Naive thymus-derived CD4-positive, alpha-beta T cell (primary cell): ENCODE measurements at regions of chr1 and their contacts with region 1.

Region 1: DNA sequence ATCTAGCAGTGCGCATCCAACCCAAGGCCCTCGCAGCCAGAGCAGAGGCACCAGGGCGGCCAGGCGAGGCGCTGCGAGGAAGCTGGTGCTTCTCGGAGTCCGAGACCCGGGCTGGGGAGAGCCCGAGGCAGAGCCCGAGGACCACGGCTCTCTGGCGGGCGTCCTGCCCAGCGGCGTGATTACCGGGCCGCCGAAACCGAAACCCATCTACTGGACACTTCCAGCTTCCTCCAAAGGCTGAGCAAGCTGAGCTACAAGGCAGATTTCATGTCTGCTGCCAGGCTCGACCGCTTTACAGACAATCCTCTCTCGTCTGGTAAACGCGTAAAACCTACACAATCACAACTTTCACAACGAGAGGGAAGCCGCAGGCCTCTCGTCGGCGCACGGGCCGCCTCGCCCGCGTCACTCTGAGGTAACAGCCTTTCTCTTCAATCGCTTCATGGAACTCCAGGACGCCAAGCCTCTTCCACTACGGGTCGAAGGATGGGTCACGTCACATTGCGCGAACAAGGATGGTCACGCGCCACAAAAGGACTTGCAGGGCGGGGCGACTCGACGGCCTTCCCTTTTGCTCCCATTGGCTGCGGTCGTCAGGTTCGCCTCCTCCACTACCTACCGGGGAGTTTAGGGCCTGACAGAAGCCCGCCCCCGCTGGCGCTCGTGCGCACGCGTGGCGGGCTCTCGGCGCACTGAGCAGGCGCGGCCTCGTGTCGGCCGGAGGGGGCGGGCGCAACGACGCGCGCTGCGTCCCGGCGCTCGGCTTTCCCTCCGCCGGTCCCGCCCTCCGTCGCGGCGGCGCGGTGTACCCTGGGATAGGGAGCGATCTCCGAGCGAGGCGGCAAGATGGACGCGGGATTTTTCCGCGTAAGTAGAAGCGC is at the start of gene SRRM1:
- DNase-seq: peak; percentile 96 to 100 (median 99)
- ATAC-seq: peak; percentile 93
- H3K4me3 ChIP-seq: peak within 1 kb of the TSS; percentile 83
- H3K4me3 Mint-ChIP-seq: peak within 1 kb of the TSS; percentile 88 to 100 (median 95)
- H3K27ac ChIP-seq: peak within 1 kb of the TSS; percentile 100
- H3K27ac Mint-ChIP-seq: peak within 1 kb of the TSS; percentile 95 to 100 (median 99)
- H3K4me1 ChIP-seq: peaks cover 26 to 32% of the 10 kb centered on the region in 2 donors
- H3K4me1 Mint-ChIP-seq: peaks cover 26 to 58% (median 51%) of the 10 kb centered on the region in 7 donors
- H3K27me3 ChIP-seq: no peaks in the 10 kb centered on the region
- H3K27me3 Mint-ChIP-seq: peaks cover 0 to under 1% (median 0%) of the 10 kb centered on the region in 5 donors
- total RNA-seq, gene SRRM1: 188 to 342 (median 246) TPM

Region 2: DNA sequence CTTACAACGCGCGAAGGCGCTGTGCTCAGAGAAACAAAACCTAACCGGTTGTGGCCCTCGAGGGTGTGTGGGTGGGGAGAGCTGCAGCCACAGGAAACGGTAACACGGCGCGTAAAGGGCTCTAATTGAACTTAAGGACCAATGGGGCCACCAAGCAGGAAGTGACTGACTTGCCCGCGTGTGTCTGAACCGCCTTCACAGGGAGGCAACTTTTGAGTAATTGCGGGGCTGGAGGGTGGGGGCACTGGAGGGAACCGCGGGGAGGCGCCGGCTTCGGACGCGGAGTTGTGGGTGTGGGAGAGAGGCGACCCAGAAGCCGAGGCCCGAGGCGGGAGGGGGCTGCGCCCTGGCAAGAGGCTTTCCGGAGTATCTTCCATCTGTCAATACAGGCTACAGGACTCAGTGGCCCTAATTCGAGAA is 683.7 kb before region 1 on chr1:
- CTCF ChIA-PET with region 1: no interaction called
- POLR2A ChIA-PET with region 1: no interaction called
- intact Hi-C with region 1: loop called (anchors 1 to 2 kb)
- DNase-seq: peak; percentile 60 to 96 (median 92)
- ATAC-seq: peak; percentile 89
- H3K4me3 ChIP-seq: peak overlapping the region; percentile 72
- H3K4me3 Mint-ChIP-seq: peak overlapping the region; percentile 93 to 100 (median 99)
- H3K27ac ChIP-seq: peak overlapping the region; percentile 95
- H3K27ac Mint-ChIP-seq: peak overlapping the region; percentile 98 to 100 (median 100)
- H3K4me1 ChIP-seq: peaks cover 23 to 25% of the 10 kb centered on the region in 2 donors
- H3K4me1 Mint-ChIP-seq: peaks cover 31 to 83% (median 57%) of the 10 kb centered on the region in 7 donors
- H3K27me3 ChIP-seq: no peaks in the 10 kb centered on the region
- H3K27me3 Mint-ChIP-seq: no peaks in the 10 kb centered on the region

Region 3: GRCh38 chr1:24391882-24392603 is 250.7 kb before region 1 on chr1:
- CTCF ChIA-PET with region 1: interaction called, 6 read pairs
- POLR2A ChIA-PET with region 1: interaction called, 6 read pairs
- intact Hi-C with region 1: loop called in 1 of 2 experiments (anchors 2 kb)
- DNase-seq: peak in 8 of 9 donors; percentile 29 to 60 (median 47)
- ATAC-seq: peak; percentile 81
- H3K4me3 ChIP-seq: peak overlapping the region; percentile 35
- H3K4me3 Mint-ChIP-seq: peak overlapping the region in 9 of 10 donors; percentile 18 to 77 (median 66)
- H3K27ac ChIP-seq: peak overlapping the region; percentile 60
- H3K27ac Mint-ChIP-seq: peak overlapping the region; percentile 76 to 97 (median 94)
- H3K4me1 ChIP-seq: peaks cover 12 to 29% of the 10 kb centered on the region in 2 donors
- H3K4me1 Mint-ChIP-seq: peaks cover 26 to 45% (median 40%) of the 10 kb centered on the region in 7 donors
- H3K27me3 ChIP-seq: no peaks in the 10 kb centered on the region
- H3K27me3 Mint-ChIP-seq: no peaks in the 10 kb centered on the region

Region 4: DNA sequence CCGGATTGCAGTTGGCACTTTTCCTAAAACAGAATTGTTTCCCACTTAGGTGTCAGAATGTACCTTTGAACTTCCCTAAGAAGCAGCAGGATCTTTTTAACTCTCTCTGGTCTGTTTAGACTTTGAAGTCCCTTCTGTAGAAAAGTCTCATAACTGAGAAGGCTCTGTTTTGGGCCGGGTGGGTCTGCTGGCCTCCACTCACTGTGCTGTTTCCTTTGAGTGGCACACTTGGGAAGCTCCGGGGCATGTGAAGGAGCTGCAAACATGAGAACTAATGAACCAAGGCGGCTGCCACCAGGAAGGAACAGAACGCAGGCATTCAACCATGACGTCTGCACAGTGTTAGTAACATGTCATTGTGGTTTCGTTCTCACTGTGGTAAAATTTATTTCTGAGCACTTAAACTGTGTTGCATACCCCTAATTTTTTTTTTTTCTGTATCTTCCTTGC is 106.3 kb before region 1 on chr1:
- CTCF ChIA-PET with region 1: no interaction called
- POLR2A ChIA-PET with region 1: interaction called, 7 read pairs
- intact Hi-C with region 1: loop called (anchors 2 kb)
- DNase-seq: peak; percentile 41 to 92 (median 87)
- ATAC-seq: peak; percentile 90
- H3K4me3 ChIP-seq: no peak overlapping the region
- H3K4me3 Mint-ChIP-seq: peak overlapping the region; percentile 79 to 91 (median 84)
- H3K27ac ChIP-seq: peak overlapping the region; percentile 96
- H3K27ac Mint-ChIP-seq: peak overlapping the region; percentile 93 to 100 (median 99)
- H3K4me1 ChIP-seq: peaks cover 30 to 38% of the 10 kb centered on the region in 2 donors
- H3K4me1 Mint-ChIP-seq: peaks cover 29 to 90% (median 70%) of the 10 kb centered on the region in 7 donors
- H3K27me3 ChIP-seq: no peaks in the 10 kb centered on the region
- H3K27me3 Mint-ChIP-seq: no peaks in the 10 kb centered on the region

Region 5: DNA sequence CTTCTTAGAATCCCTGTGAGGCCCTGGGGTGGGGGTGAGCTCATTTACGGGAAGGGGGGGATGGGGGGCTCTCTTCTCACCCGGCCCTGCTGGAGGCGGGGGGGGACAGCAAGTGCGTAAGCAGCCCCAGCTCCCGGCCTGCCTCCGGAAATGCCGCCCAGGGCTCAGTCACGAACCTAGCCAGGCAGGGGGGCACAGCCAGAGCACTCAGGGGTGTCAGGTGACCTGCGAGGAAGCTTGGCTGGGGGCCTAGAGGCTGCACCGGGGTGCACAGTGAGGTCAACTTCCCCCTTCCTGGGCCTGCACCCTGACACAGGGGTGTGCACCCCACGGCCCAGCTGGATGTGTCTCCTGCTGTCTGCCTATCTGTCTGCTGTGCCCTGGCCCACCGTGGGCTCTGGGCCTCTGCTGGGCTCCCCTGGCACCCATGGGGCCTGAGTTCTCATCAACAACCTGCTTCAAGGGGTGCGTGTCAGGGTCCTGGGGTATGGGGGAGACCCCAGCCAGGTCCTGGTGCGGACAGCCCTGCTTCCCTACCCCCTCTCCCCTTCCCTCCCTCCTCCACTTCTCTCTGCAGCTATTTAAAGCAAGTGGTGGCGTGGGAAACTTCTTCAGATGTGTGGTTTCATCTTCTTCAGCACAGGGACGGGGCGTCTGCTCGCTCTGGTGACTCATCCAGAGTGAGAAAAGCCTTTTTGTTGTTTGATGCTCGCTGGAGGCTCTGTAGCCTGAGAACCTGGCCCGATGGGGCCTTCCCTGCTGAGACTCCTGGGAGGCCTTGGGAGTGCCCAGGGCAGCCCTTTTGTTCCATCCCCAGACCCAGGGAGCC is 379.9 kb after region 1 on chr1:
- CTCF ChIA-PET with region 1: no interaction called
- POLR2A ChIA-PET with region 1: no interaction called
- intact Hi-C with region 1: loop called in 1 of 2 experiments (anchors 1 kb)
- DNase-seq: peak; percentile 80 to 97 (median 91)
- ATAC-seq: peak; percentile 92
- H3K4me3 ChIP-seq: peak overlapping the region; percentile 49
- H3K4me3 Mint-ChIP-seq: peak overlapping the region; percentile 10 to 83 (median 76)
- H3K27ac ChIP-seq: peak overlapping the region; percentile 89
- H3K27ac Mint-ChIP-seq: peak overlapping the region; percentile 91 to 98 (median 96)
- H3K4me1 ChIP-seq: peaks cover 57 to 58% of the 10 kb centered on the region in 2 donors
- H3K4me1 Mint-ChIP-seq: peaks cover 45 to 89% (median 67%) of the 10 kb centered on the region in 7 donors
- H3K27me3 ChIP-seq: no peaks in the 10 kb centered on the region
- H3K27me3 Mint-ChIP-seq: no peaks in the 10 kb centered on the region

Region 6: DNA sequence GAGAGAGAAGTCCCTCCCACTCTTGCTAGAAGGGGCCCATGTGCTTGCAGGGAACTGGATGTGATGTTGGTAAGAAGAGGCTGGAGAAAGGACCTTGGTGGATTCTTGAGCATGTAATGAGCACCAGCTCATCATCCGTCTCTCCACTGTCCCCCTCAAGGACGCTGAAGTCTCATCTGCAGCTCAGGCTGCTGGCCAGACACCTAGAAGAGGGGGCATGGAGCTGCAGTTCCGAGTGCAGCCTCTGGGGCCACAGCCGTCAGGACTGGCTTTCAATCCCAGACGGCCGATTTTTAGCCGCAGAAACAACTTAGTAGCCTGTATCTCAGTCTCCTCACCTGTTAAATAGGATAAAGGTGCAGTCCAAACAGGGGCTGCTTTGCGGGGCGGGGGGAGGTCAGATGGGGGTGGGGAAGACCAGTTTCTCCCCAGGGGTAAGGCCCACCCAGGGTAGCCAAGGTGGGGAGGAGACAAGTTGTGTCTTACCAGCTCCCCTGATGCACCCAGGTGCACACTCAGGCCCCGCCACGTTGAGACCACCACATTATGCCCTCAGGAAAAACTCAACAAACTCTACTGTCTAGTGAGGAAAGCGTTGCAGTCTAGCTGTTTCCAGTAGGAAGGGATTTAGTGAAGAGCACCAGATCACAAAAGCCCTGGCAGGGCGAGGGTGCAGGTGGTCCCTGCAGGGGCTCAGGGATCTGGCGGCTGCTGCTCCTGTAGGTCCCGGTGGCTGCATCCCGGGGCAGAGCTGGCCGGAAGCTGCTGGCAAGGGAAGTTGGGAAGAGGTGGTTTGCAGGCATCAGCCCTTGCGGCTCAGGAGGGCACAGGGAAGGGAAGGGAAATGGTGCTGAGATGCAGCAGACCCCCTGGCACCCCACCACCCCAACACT is 930.2 kb after region 1 on chr1:
- CTCF ChIA-PET with region 1: no interaction called
- POLR2A ChIA-PET with region 1: no interaction called
- intact Hi-C with region 1: loop called in 1 of 2 experiments (anchors 10 kb)
- DNase-seq: peak in 7 of 9 donors; percentile 42 to 54 (median 49)
- ATAC-seq: peak; percentile 80
- H3K4me3 ChIP-seq: no peak overlapping the region
- H3K4me3 Mint-ChIP-seq: peak overlapping the region in 7 of 10 donors; percentile 7 to 43 (median 29)
- H3K27ac ChIP-seq: peak overlapping the region; percentile 24
- H3K27ac Mint-ChIP-seq: peak overlapping the region in 8 of 9 donors; percentile 71 to 92 (median 79)
- H3K4me1 ChIP-seq: peaks cover 8 to 28% of the 10 kb centered on the region in 2 donors
- H3K4me1 Mint-ChIP-seq: peaks cover 11 to 73% (median 58%) of the 10 kb centered on the region in 7 donors
- H3K27me3 ChIP-seq: no peaks in the 10 kb centered on the region
- H3K27me3 Mint-ChIP-seq: no peaks in the 10 kb centered on the region